PC-3 (cell line): ENCODE measurements at regions of chr14 and their contacts with region 1.

Region 1: GRCh38 chr14:103594265-103594664 is 31.5 kb downstream of the COA8 start:
- DNase-seq: peak; percentile 96
- ATAC-seq: peak; percentile 83
- H3K4me3 ChIP-seq: peak overlapping the region; percentile 47; the same call in 1 of the 2 replicates
- H3K27ac ChIP-seq: peak overlapping the region; percentile 97
- H3K4me1 ChIP-seq: peaks cover 51% of the 10 kb centered on the region
- H3K27me3 ChIP-seq: no peaks in the 10 kb centered on the region
- CTCF ChIP-seq: no peak

Region 2: GRCh38 chr14:103301512-103302354 is 292.5 kb before region 1 on chr14:
- CTCF ChIA-PET with region 1: no interaction called
- POLR2A ChIA-PET with region 1: interaction called, 13 read pairs
- intact Hi-C with region 1: no loop called
- DNase-seq: peak; percentile 35
- ATAC-seq: peak; percentile 92
- H3K4me3 ChIP-seq: no peak overlapping the region
- H3K27ac ChIP-seq: peak overlapping the region; percentile 33
- H3K4me1 ChIP-seq: peaks cover 14% of the 10 kb centered on the region
- H3K27me3 ChIP-seq: no peaks in the 10 kb centered on the region
- CTCF ChIP-seq: no peak

Region 3: GRCh38 chr14:103628684-103629502 is 34.6 kb after region 1 on chr14 and contains the start of gene KLC1:
- CTCF ChIA-PET with region 1: no interaction called
- POLR2A ChIA-PET with region 1: interaction called, 4 read pairs
- intact Hi-C with region 1: loop called (anchors 1 kb)
- DNase-seq: peak; percentile 58
- ATAC-seq: peak; percentile 20
- H3K4me3 ChIP-seq: peak within 1 kb of the TSS; percentile 97
- H3K27ac ChIP-seq: peak within 1 kb of the TSS; percentile 93
- H3K4me1 ChIP-seq: peaks cover 59% of the 10 kb centered on the region
- H3K27me3 ChIP-seq: no peaks in the 10 kb centered on the region
- CTCF ChIP-seq: no peak
- total RNA-seq, gene KLC1: 306 and 466 TPM in 2 replicates

Region 4: GRCh38 chr14:103910262-103910935 is 316.1 kb after region 1 on chr14:
- CTCF ChIA-PET with region 1: no interaction called
- POLR2A ChIA-PET with region 1: no interaction called
- intact Hi-C with region 1: no loop called
- DNase-seq: peak; percentile 96
- ATAC-seq: peak; percentile 100
- H3K4me3 ChIP-seq: peak overlapping the region; percentile 20; the same call in 1 of the 2 replicates
- H3K27ac ChIP-seq: no peak overlapping the region
- H3K4me1 ChIP-seq: peaks cover 5% of the 10 kb centered on the region; the same call in 1 of the 2 replicates
- H3K27me3 ChIP-seq: no peaks in the 10 kb centered on the region
- CTCF ChIP-seq: peak; percentile 92